ENCODE measurements at regions of chr2 and their contacts with region 1.

Region 1: DNA sequence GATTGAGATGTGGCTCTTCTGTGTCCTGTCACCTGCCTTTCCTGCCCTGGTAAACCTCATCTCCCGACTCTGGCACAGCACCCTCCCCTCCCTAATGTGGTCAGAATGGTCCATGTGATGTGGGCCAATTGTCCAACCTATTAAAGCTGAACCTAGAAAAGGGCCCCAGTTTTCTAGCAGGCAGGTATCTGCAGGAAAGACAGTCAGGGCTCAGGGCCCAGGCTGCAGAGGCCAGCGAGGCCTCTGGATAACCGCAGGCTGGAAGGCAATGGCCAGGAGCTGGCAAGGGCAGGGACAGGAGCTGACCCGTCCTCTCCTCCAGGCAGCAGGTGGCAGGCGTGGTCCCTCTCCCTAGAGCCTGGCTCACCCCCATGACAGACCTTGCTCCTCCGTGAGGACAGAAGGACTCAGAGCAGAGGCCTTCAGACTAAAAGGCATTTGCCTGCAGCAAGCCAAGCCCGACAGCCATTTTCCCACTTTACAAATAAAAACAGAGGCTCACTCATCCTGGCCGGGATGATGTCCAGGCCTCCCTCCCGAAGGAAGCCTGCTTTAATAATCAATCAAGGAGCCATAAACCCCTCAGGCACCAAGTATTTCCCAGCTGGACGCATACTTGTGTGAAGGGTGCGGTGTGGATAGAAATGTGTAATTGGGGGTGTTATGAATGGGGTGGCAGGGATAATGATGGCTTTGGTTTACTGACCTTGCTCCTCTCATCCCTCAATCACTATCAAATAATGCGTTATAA is 107.1 kb downstream of the TWIST2 start:
- DNase-seq: peak in 1 of 2 donors; percentile 7
- H3K4me3 ChIP-seq: no peak overlapping the region
- H3K27ac ChIP-seq: no peak overlapping the region
- H3K4me1 ChIP-seq: no peaks in the 10 kb centered on the region
- H3K27me3 ChIP-seq: no peaks in the 10 kb centered on the region
- CTCF ChIP-seq: no peak
- POLR2A ChIP-seq: no peak

Region 2: GRCh38 chr2:238596571-238597551 is 358.2 kb before region 1 on chr2:
- intact Hi-C with region 1: loop called (anchors 10 kb)
- DNase-seq: peak in 1 of 2 donors; percentile 87
- H3K4me3 ChIP-seq: peak overlapping the region in 1 of 3 donors; percentile 15
- H3K27ac ChIP-seq: peak overlapping the region; percentile 82 to 90
- H3K4me1 ChIP-seq: peaks cover 7 to 9% of the 10 kb centered on the region in 2 donors
- H3K27me3 ChIP-seq: no peaks in the 10 kb centered on the region
- CTCF ChIP-seq: no peak
- POLR2A ChIP-seq: no peak

Region 3: GRCh38 chr2:238970553-238971081 is 15.6 kb after region 1 on chr2:
- intact Hi-C with region 1: no loop called
- DNase-seq: no peak
- H3K4me3 ChIP-seq: no peak overlapping the region
- H3K27ac ChIP-seq: no peak overlapping the region
- H3K4me1 ChIP-seq: no peaks in the 10 kb centered on the region
- H3K27me3 ChIP-seq: no peaks in the 10 kb centered on the region
- CTCF ChIP-seq: peak; percentile 91 to 95 (median 93)
- POLR2A ChIP-seq: no peak

Measured in breast epithelium (tissue), 4 donors.